ENCODE measurements at regions of chr22 and their contacts with region 1.

Region 1: DNA sequence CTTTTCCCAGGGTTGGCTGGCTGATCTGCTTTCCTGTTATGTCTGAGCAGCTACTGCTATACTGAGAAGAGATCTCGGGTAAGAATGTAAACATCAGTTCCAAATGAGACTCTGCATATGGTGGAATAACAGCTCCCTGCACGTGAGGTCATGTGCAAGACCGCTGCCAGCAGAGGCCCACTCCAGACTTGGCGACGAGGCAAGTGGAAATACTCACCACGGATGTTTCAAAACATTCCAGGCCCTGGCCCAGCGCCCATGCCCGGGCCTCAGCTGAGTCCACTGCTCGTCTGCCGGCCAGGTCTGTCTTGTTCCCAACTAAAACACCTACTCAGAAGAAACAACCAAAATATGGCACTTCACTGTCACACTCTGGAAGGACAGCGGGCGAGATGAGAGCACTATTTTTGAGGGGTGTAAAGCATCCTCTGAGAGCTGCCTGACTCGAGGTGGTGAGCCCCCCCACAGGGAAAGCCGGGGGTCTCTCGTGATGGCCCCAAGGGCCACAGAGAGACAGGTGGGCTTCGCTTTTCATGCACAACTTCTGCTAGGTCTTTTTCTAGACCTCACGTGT is 13.1 kb downstream of the IFT27 start:
- DNase-seq: no peak
- H3K4me3 ChIP-seq: no peak overlapping the region
- H3K27ac ChIP-seq: peak overlapping the region in 1 of 4 donors; percentile 34
- H3K4me1 ChIP-seq: peaks cover 5 to 55% (median 20%) of the 10 kb centered on the region in 3 donors
- H3K27me3 ChIP-seq: no peaks in the 10 kb centered on the region
- CTCF ChIP-seq: no peak
- POLR2A ChIP-seq: no peak

Region 2: GRCh38 chr22:36552289-36552688 is 210.5 kb before region 1 on chr22:
- intact Hi-C with region 1: loop called (anchors 10 kb)
- DNase-seq: no peak
- H3K4me3 ChIP-seq: no peak overlapping the region
- H3K27ac ChIP-seq: no peak overlapping the region
- H3K4me1 ChIP-seq: peaks cover 0 to 31% (median 8%) of the 10 kb centered on the region in 3 donors
- H3K27me3 ChIP-seq: peaks cover 0 to 65% (median 3%) of the 10 kb centered on the region in 4 donors
- CTCF ChIP-seq: no peak
- POLR2A ChIP-seq: no peak

Region 3: DNA sequence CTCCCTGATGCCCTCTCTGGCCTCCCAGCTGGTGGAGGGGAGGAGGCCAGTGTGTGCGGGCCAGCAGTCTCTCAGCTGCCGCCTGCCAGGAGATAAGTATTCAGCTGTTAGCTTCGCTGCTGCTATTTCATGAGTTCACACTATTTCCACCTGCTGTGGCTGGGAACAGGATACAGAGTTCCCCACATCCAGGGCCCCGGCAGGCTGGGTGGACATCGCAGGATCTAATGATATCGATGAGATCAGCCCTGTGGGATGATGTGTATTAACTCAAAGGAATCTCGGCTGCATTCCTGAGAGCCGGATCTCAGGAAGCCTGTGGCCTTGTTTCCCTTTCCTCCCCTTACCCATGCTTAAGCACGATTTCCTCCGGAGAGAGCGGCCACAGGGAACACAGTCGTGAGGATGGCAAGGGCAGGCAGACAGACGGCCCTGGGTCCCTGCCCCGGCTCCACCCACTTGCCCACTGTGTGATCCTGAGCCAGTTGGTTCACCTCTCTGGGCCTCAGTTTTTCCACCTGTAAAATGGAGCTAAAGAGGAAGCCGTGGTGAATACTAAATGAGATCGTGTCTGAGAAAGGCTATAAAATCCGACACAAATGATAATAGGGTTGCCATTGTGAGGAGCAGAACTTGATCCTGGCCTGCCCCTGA is 60.5 kb after region 1 on chr22:
- intact Hi-C with region 1: no loop called
- DNase-seq: no peak
- H3K4me3 ChIP-seq: no peak overlapping the region
- H3K27ac ChIP-seq: no peak overlapping the region
- H3K4me1 ChIP-seq: no peaks in the 10 kb centered on the region
- H3K27me3 ChIP-seq: peaks cover 0 to 50% (median 6%) of the 10 kb centered on the region in 4 donors
- CTCF ChIP-seq: no peak
- POLR2A ChIP-seq: no peak